ENCODE measurements at regions of chr20 and their contacts with region 1.

Region 1: DNA sequence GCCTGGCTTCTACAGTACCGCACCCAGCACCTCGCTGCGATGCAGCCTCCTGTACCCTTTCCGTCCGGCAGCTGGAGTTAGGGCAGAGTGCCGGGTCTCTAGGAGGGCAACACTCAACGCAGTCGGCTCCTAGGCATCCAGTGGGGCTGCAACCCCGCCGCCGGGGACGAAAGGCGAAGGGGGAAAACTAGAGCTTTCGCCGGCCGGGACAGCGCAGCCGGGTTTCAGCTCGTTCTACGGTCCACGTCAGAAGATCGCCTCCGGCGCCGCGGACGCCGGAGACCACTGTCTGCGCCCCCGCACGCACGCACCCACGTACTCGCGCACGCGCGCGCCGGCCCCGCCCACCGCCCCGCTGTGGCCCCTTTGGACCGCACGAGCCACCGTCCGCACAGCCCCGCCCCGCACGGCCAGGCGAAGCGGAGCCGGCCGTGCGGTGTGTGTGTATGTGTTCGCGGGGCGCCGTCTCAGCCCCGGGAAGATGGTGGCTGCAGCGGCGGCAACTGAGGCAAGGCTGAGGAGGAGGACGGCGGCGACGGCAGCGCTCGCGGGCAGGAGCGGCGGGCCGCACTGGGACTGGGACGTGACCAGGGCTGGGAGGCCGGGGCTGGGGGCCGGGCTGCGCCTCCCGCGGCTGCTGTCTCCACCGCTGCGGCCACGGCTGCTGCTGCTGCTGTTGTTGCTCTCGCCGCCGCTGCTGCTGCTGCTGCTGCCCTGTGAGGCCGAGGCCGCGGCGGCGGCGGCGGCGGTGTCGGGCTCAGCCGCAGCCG is at the start of gene ATRN:
- DNase-seq: peak; percentile 92 to 93 (median 92)
- ATAC-seq: peak; percentile 99
- H3K4me3 ChIP-seq: peak within 1 kb of the TSS; percentile 88
- H3K4me1 ChIP-seq: peaks cover 23% of the 10 kb centered on the region
- CTCF ChIP-seq: no peak
- total RNA-seq, gene ATRN: 22.1 to 28.2 (median 23.7) TPM

Region 2: DNA sequence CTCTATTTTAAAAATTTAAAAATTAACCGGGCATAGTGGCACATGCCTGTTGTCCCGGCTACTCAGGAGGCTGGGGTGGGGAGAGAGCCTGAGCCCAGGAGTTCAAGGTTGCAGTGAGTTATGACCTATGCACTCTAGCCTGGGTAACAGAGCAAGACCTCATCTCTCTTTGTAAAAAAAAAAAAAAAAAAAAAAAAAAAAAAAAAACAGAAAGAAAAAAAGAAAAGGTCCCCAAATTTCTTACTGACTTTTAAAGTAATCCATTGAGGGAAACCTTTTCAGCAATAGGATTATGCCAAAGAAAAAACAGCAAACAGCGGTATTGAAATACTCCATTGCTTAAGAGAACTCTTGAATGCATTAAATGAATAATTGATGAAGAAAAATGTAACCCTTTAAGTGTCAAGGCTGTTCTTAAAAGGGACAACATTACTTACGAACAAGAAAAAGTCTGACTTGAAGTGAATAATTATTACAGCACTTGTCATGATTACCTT is 57.4 kb before region 1 on chr20:
- intact Hi-C with region 1: loop called in 1 of 2 experiments (anchors 10 kb)
- DNase-seq: no peak
- ATAC-seq: no peak
- H3K4me3 ChIP-seq: no peak overlapping the region
- H3K4me1 ChIP-seq: no peaks in the 10 kb centered on the region
- CTCF ChIP-seq: no peak

Region 3: DNA sequence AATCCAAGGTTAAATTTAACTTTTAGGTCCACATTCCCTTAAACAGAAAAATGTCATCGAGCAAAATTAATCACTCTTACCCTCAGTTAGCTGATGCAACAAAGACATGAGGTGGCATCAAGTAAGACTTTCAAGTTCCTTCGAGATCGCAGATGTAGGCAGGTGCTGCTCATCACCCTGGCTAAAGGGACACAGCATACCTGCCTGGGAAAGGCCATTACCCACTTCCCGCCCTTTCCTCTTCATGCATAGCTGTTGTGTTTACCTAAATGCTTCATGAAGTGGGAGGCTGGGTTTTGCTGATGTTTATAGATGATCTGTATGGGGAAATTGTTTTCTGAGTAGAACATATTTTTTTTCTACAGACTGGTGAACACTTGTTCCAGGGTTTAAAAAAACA is 124.7 kb after region 1 on chr20:
- intact Hi-C with region 1: no loop called
- DNase-seq: no peak
- ATAC-seq: no peak
- H3K4me3 ChIP-seq: no peak overlapping the region
- H3K4me1 ChIP-seq: no peaks in the 10 kb centered on the region
- CTCF ChIP-seq: no peak

Measured in mucosa of descending colon (tissue), 3 donors.